ENCODE measurements at regions of chr12 and their contacts with region 1.

Region 1: GRCh38 chr12:23831739-23832138 is 117.7 kb downstream of the SOX5 start:
- DNase-seq: no peak
- ATAC-seq: no peak
- H3K4me3 ChIP-seq: no peak overlapping the region
- H3K27ac ChIP-seq: no peak overlapping the region
- H3K4me1 ChIP-seq: no peaks in the 10 kb centered on the region
- H3K27me3 ChIP-seq: no peaks in the 10 kb centered on the region

Region 2: DNA sequence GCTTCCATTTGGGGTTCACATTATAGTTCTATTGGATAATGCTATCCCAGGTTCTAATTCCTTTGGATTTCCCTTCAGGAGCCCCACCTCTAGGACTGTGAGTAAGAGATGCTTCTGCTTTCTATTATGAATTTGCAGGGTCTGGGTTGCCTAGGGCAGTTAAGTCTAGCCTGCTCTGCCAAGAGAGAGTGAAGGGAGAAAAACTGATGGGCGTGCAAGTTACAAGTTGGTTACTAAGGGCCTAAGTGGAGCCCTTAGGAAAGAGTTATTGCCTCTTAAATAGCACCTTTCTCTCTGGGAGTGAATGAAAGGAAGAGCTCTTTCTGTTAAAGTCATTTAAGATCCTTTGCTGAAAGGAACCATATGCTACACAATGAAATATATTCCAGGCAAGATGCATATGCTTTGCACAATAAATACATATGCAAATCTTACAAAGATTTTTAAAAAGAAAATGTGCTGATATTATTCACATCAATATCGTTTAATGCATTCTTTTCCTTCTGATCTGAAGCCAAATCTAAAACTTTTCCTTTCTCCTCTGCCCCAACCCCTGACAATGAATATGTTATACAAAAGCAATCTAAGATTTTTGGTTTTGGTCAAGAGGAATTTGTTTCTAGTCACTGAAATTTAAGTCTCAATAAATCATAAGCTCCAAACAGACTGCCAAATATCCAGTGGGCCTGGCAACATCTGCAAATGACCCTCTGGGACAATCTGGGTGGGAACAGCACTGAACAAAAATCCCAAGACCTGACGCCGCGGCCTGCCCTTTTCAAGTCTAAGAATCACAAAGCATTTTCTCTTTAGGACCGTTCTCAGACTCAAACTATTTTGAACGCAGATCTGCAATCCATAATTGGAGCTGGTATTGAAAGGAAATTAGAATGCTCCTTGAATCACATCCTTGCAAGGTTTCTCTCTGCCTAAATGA is 620.1 kb before region 1 on chr12:
- intact Hi-C with region 1: loop called in 1 of 2 experiments (anchors 5 kb)
- DNase-seq: no peak
- ATAC-seq: no peak
- H3K4me3 ChIP-seq: no peak overlapping the region
- H3K27ac ChIP-seq: peak overlapping the region; percentile 57 to 73
- H3K4me1 ChIP-seq: peaks cover 3 to 4% of the 10 kb centered on the region in 2 donors
- H3K27me3 ChIP-seq: peaks cover 0 to 2% of the 10 kb centered on the region in 2 donors

Measured in aorta (tissue), 5 donors.